Heart left ventricle (tissue), 16 donors: ENCODE measurements at regions of chr15 and their contacts with region 1.

Region 1: DNA sequence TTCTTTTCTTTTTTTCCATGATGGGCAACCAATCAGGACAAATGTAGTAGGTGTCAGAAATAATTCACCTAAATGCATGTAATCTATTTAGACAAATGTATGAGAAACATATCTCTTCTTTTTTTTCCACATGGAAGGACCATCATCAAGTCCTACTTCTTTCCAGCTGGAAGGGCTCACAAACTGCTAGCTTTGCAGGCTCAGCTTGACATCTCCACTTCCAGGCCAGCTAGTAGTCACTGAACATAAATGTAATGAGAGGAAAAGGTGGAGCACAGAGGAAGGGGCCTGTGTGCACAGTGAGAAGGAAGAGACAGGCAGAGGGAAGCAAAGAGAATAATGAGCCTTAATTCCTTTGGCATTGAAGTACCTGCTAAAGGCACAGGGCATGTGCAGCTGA is 504.9 kb downstream of the MCTP2 start:
- DNase-seq: no peak
- ATAC-seq: no peak
- H3K4me3 ChIP-seq: no peak overlapping the region
- H3K27ac ChIP-seq: no peak overlapping the region
- H3K4me1 ChIP-seq: no peaks in the 10 kb centered on the region
- H3K27me3 ChIP-seq: no peaks in the 10 kb centered on the region
- CTCF ChIP-seq: no peak
- POLR2A ChIP-seq: no peak

Region 2: GRCh38 chr15:94793641-94794040 is 57.4 kb after region 1 on chr15:
- intact Hi-C with region 1: loop called in 1 of 10 experiments (anchors 10 kb)
- DNase-seq: no peak
- ATAC-seq: no peak
- H3K4me3 ChIP-seq: no peak overlapping the region
- H3K27ac ChIP-seq: no peak overlapping the region
- H3K4me1 ChIP-seq: no peaks in the 10 kb centered on the region
- H3K27me3 ChIP-seq: no peaks in the 10 kb centered on the region
- CTCF ChIP-seq: no peak
- POLR2A ChIP-seq: no peak

Region 3: GRCh38 chr15:95105229-95105628 is 369.0 kb after region 1 on chr15:
- intact Hi-C with region 1: no loop called
- DNase-seq: no peak
- ATAC-seq: no peak
- H3K4me3 ChIP-seq: no peak overlapping the region
- H3K27ac ChIP-seq: no peak overlapping the region
- H3K4me1 ChIP-seq: no peaks in the 10 kb centered on the region
- H3K27me3 ChIP-seq: no peaks in the 10 kb centered on the region
- CTCF ChIP-seq: no peak
- POLR2A ChIP-seq: no peak